K562 (cell line): ENCODE measurements at regions of chr1 and their contacts with region 1.

Region 1: DNA sequence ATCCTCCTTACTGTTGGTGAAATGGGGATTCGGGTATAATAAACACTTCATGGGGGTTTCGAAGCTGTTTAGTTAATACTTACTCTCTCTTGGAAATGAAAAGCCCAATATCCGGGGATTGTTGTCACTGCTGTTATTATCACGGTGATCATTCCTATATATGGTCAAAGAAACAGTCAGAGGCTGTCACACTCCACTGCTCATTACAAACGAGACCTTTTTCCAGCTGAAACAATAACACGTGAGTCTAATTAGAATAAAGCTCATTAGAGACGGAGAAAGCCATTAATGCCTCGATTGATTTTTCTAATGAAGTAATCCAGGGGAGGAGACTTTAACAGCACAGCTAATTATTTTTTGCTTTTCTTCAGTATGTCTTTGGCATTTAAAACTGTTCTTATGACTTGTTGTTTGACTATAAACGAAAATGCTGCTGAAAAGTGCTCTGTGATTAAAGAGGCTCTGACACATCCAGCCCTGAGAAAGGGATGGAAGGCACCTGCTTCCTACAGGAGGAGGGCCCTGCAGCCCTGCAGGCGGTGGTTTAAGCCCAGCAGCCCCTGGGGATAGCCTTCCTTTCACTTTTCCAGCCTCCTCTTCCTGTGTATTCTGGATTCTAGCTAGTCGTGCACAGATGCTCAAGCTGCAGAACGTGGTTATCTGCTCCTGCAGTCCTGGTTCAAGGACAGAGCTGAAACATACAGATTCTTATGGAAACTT is 143.6 kb downstream of the EDEM3 start:
- DNase-seq: no peak
- ATAC-seq: peak; percentile 67
- H3K4me3 ChIP-seq: no peak overlapping the region
- H3K27ac ChIP-seq: no peak overlapping the region
- H3K4me1 ChIP-seq: no peaks in the 10 kb centered on the region; a peak in 1 of 5 replicates
- H3K27me3 ChIP-seq: no peaks in the 10 kb centered on the region
- CTCF ChIP-seq: no peak
- EP300 ChIP-seq: no peak
- POLR2A ChIP-seq: no peak
- RAD21 ChIP-seq: no peak

Region 2: GRCh38 chr1:184595591-184595990 is 15.4 kb before region 1 on chr1:
- CTCF ChIA-PET with region 1: no interaction called
- POLR2A ChIA-PET with region 1: interaction called, 13 read pairs
- in situ Hi-C with region 1: no loop called
- intact Hi-C with region 1: no loop called
- DNase-seq: no peak
- ATAC-seq: no peak
- H3K4me3 ChIP-seq: no peak overlapping the region
- H3K27ac ChIP-seq: no peak overlapping the region
- H3K4me1 ChIP-seq: no peaks in the 10 kb centered on the region; a peak in 1 of 5 replicates
- H3K27me3 ChIP-seq: peaks cover 8 to 14% of the 10 kb centered on the region in 2 experiments; a peak in 3 of 5 replicates
- CTCF ChIP-seq: no peak
- EP300 ChIP-seq: no peak
- POLR2A ChIP-seq: no peak
- RAD21 ChIP-seq: no peak

Region 3: DNA sequence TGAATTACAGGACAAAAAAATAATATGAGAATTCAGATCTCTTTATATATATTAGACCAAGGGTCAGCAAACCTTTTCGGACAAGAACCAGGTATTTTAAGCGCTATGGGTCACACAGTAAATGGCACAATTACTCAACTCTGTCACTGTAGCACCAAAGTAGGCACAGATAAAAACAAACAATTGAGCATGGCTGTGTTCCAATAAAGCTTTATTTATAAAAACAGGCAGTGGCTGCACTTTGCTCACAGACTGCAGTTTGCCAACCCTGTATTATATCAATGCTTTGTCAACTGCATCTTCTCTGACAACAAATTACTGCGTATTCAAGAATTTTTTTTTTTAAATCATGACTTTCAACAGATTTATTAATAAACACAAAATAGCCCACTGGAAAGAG is 113.8 kb after region 1 on chr1:
- CTCF ChIA-PET with region 1: no interaction called
- POLR2A ChIA-PET with region 1: no interaction called
- in situ Hi-C with region 1: no loop called
- intact Hi-C with region 1: no loop called
- DNase-seq: no peak
- ATAC-seq: no peak
- H3K4me3 ChIP-seq: no peak overlapping the region
- H3K27ac ChIP-seq: no peak overlapping the region
- H3K4me1 ChIP-seq: no peaks in the 10 kb centered on the region
- H3K27me3 ChIP-seq: no peaks in the 10 kb centered on the region
- CTCF ChIP-seq: no peak
- EP300 ChIP-seq: no peak
- POLR2A ChIP-seq: no peak
- RAD21 ChIP-seq: no peak